Prostate gland (tissue), 2 donors: ENCODE measurements at regions of chr13 and their contacts with region 1.

Region 1: GRCh38 chr13:79541426-79542049 is 60.6 kb downstream of the NDFIP2 start:
- DNase-seq: peak; percentile 35
- H3K4me3 ChIP-seq: no peak overlapping the region
- H3K27ac ChIP-seq: no peak overlapping the region
- H3K4me1 ChIP-seq: no peaks in the 10 kb centered on the region
- H3K27me3 ChIP-seq: no peaks in the 10 kb centered on the region
- CTCF ChIP-seq: peak; percentile 83 to 93 (median 88)
- POLR2A ChIP-seq: no peak

Region 2: DNA sequence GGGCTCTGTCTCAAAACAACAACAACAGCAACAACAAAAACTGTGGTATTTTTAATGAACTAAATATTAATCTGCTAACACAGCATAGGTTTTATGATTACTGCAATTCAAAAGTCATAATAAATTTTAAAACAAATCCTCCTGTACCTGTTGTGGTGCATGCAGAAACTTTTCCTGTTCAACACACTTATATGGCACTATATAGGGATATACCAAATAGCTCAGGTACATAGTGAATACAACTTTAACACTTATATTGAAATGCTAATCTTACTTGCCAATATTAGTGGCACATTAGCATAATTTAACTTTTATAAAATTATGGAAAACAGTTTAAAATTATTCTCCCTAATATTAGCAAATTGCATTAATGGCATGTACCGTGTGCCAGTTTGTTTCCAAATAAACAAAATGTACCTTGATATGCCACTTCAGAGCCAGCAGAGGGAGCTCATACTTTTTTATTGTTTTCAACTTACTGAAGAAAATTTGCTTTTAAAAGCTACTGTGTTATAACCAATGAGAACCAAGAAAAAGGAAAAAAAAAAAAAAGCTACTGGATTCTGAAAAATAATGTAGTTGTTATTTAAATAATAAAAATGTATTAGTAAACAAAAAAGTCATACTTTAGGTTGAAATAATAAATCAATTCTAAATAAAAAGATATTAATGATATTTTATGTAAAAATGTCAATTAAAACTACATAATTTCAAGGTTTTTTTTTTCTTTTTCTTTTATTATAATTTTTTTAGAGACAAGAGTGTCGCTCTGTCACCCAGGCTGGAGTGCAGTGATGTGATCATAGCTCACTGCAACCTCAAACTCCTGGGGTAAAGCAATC is 117.5 kb before region 1 on chr13:
- intact Hi-C with region 1: loop called (anchors 5 kb)
- DNase-seq: no peak
- H3K4me3 ChIP-seq: no peak overlapping the region
- H3K27ac ChIP-seq: no peak overlapping the region
- H3K4me1 ChIP-seq: no peaks in the 10 kb centered on the region
- H3K27me3 ChIP-seq: no peaks in the 10 kb centered on the region
- CTCF ChIP-seq: peak in 3 of 4 experiments; percentile 64 to 79 (median 74)
- POLR2A ChIP-seq: no peak

Region 3: DNA sequence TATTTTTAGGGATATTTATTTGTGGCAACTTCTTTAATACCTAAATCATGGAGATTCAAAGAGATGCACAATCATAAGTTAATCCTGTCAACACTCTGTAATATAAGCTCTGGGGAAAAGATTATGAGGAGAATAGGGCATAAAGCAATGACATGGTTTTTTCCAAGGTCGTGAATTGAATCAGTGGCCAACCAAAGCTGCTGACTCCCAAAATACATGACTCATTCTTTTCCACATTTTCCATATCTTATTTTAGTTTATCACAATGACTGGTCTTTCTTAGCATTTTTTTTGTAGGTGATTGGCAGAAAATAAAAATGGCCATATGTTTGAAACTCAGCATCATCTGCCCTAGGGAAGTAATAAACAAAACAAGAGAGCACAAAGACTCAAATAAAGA is 107.0 kb before region 1 on chr13:
- intact Hi-C with region 1: loop called (anchors 5 kb)
- DNase-seq: no peak
- H3K4me3 ChIP-seq: no peak overlapping the region
- H3K27ac ChIP-seq: no peak overlapping the region
- H3K4me1 ChIP-seq: no peaks in the 10 kb centered on the region
- H3K27me3 ChIP-seq: no peaks in the 10 kb centered on the region
- CTCF ChIP-seq: no peak
- POLR2A ChIP-seq: no peak